Endothelial cell of umbilical vein (primary cell): ENCODE measurements at regions of chr1 and their contacts with region 1.

Region 1: GRCh38 chr1:63004868-63005267 is 220.9 kb downstream of the ATG4C start:
- DNase-seq: no peak
- H3K4me3 ChIP-seq: no peak overlapping the region
- H3K27ac ChIP-seq: no peak overlapping the region
- H3K4me1 ChIP-seq: no peaks in the 10 kb centered on the region
- H3K27me3 ChIP-seq: peaks cover 0 to 5% of the 10 kb centered on the region in 2 experiments
- CTCF ChIP-seq: no peak
- POLR2A ChIP-seq: no peak

Region 2: GRCh38 chr1:62905309-62906271 is 99.3 kb before region 1 on chr1:
- CTCF ChIA-PET with region 1: no interaction called
- POLR2A ChIA-PET with region 1: no interaction called
- dilution Hi-C with region 1: no loop called
- intact Hi-C with region 1: no loop called
- DNase-seq: no peak
- H3K4me3 ChIP-seq: no peak overlapping the region
- H3K27ac ChIP-seq: no peak overlapping the region
- H3K4me1 ChIP-seq: no peaks in the 10 kb centered on the region
- H3K27me3 ChIP-seq: peaks cover 1 to 9% of the 10 kb centered on the region in 2 experiments
- CTCF ChIP-seq: no peak
- POLR2A ChIP-seq: no peak

Region 3: DNA sequence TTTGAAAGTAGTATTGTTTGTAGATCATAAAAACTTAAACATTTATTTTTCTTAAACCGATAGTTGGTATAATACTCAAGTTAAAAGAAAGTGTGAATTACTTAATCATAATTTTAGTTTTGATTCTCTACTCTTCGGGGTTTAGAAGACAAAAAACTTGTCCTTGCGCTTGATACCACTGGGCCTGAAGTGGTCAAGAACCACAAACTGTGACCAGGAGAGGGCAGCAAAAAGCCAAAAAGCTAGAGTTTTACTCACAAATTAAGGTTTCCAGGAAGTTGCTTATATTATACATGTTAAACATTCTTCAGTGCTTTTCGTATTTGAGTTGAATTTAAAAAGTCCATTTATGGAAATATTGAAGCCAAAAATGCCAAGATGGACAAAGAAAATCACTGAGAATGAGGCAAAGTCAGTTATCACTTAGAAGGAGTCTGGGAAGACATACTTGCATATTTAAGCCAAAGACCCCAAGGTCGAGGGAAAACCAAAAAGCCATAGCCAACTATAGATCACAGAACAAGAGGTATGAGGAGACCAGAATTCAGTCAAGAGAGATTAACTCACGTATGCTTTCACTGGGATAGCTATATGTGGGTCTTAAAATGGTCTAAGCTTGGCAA is 552.6 kb after region 1 on chr1:
- CTCF ChIA-PET with region 1: no interaction called
- POLR2A ChIA-PET with region 1: no interaction called
- dilution Hi-C with region 1: no loop called
- intact Hi-C with region 1: loop called (anchors 10 kb)
- DNase-seq: peak; percentile 52
- H3K4me3 ChIP-seq: no peak overlapping the region
- H3K27ac ChIP-seq: no peak overlapping the region
- H3K4me1 ChIP-seq: no peaks in the 10 kb centered on the region
- H3K27me3 ChIP-seq: no peaks in the 10 kb centered on the region
- CTCF ChIP-seq: peak; percentile 53 to 58
- POLR2A ChIP-seq: no peak